ENCODE measurements at regions of chr1 and their contacts with region 1.

Region 1: GRCh38 chr1:171355727-171356126 is 41.7 kb downstream of the FMO4 start:
- DNase-seq: no peak
- H3K4me3 ChIP-seq: no peak overlapping the region
- H3K27ac ChIP-seq: no peak overlapping the region
- H3K4me1 ChIP-seq: no peaks in the 10 kb centered on the region
- H3K27me3 ChIP-seq: no peaks in the 10 kb centered on the region
- CTCF ChIP-seq: no peak
- POLR2A ChIP-seq: no peak

Region 2: DNA sequence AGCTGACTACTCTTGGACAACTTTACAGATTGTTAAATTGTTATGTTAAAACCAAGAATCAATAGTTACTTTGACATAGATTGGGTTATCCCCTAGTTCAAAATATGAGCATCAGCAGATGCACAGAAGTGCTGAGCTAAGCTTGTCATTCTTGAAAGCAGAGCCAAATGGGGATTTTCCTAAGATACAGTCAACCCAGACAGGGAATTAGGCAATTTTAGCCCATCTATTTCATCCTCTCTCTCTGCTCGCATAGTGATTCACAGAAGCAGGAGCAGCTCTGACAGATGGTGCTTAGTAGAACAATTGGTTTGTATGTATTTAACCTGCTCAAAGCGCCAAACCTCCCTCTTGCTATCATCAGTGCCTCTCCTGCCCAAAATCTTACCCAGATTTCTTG is 101.7 kb after region 1 on chr1:
- CTCF ChIA-PET with region 1: no interaction called
- POLR2A ChIA-PET with region 1: no interaction called
- dilution Hi-C with region 1: no loop called
- intact Hi-C with region 1: loop called (anchors 5 kb)
- DNase-seq: no peak
- H3K4me3 ChIP-seq: no peak overlapping the region
- H3K27ac ChIP-seq: no peak overlapping the region
- H3K4me1 ChIP-seq: no peaks in the 10 kb centered on the region
- H3K27me3 ChIP-seq: peaks cover 0 to 4% of the 10 kb centered on the region in 2 experiments
- CTCF ChIP-seq: no peak
- POLR2A ChIP-seq: no peak

Region 3: DNA sequence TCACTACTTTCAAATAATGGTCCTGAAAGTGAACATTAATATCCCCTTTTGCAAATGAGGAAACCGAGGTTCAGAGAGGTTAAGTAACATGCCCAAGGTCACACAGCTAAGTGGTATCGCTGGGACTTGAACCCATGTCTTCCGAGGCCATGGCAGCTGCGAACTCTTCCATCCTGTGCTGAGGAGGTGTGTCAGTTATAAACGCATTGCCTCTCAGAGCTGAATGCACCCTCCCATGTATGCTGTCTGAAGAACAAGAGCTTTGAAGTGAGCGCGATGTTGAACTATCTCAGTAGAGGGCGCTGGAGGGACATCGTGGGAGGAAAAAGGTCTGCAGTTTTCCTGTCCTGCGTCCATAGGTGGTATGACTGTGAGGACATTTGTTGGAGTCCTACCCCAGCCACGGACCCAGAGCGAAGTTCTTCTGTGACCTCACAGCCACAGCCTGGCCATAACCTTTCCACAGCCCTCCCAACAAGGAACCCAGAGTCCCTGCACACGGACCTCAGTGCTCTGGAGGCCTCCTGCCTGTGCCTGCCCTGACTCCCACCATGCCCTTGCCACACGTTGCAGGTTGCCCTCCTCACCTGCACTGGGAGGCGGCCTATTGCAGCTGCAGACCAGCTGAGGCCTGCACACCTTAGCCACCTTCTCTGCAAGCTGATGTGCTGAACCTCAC is 289.2 kb after region 1 on chr1:
- CTCF ChIA-PET with region 1: no interaction called
- POLR2A ChIA-PET with region 1: no interaction called
- dilution Hi-C with region 1: no loop called
- intact Hi-C with region 1: no loop called
- DNase-seq: peak; percentile 86
- H3K4me3 ChIP-seq: no peak overlapping the region
- H3K27ac ChIP-seq: no peak overlapping the region
- H3K4me1 ChIP-seq: no peaks in the 10 kb centered on the region
- H3K27me3 ChIP-seq: peaks cover 0 to 2% of the 10 kb centered on the region in 2 experiments
- CTCF ChIP-seq: peak; percentile 78 to 86
- POLR2A ChIP-seq: no peak

Measured in endothelial cell of umbilical vein (primary cell).